ENCODE measurements at regions of chr16 and their contacts with region 1.

Region 1: DNA sequence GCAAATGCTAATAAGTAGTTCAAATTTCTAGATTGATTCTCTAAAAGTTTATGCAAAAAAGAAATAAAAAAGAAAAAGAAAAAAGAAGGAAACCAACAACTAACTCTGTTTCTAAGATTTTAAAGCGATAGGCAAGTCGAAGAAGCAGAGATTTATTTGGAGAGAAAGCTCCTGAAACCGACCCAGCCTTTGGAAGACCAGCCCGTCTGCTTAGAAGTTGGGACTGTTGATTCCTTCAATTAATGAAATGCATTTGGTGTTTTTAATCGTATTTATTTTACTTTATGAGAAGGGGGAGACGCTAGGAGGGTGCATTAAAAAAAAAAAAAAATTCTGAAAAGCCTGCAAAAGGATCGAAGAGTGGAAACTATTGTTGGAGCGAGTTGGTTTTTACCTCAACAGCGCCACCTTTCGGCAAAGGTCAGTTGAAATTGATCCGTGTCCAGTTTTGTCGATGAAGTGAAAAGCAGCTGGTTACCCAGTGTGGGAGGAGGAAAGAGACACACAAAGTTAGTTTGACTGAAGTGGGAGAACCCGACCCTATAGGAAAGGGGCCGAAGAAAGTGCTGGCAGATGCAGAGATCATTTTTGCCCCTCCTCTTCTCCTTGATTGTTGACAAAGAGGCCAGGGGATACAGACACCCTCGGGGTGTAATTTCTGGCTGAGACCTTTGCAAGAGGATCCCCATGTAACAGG is 1.5 kb upstream of the MAF start:
- DNase-seq: peak; percentile 41 to 85 (median 80)
- H3K4me3 ChIP-seq: peak overlapping the region; percentile 75
- H3K4me3 Mint-ChIP-seq: peak overlapping the region; percentile 92 to 99 (median 94)
- H3K27ac ChIP-seq: no peak overlapping the region
- H3K27ac Mint-ChIP-seq: peak overlapping the region in 7 of 8 donors; percentile 92 to 96 (median 94)
- H3K4me1 ChIP-seq: peaks cover 14% of the 10 kb centered on the region
- H3K4me1 Mint-ChIP-seq: peaks cover 15 to 36% (median 32%) of the 10 kb centered on the region in 3 donors
- H3K27me3 ChIP-seq: no peaks in the 10 kb centered on the region
- H3K27me3 Mint-ChIP-seq: peaks cover under 1 to 4% of the 10 kb centered on the region in 2 donors

Region 2: GRCh38 chr16:78925083-78925767 is 676.9 kb before region 1 on chr16:
- CTCF ChIA-PET with region 1: interaction called, 18 read pairs
- POLR2A ChIA-PET with region 1: interaction called, 3 read pairs
- DNase-seq: peak in 3 of 5 donors; percentile 2 to 49 (median 5)
- H3K4me3 ChIP-seq: no peak overlapping the region
- H3K4me3 Mint-ChIP-seq: no peak overlapping the region
- H3K27ac ChIP-seq: no peak overlapping the region
- H3K27ac Mint-ChIP-seq: peak overlapping the region in 1 of 8 donors; percentile 15
- H3K4me1 ChIP-seq: no peaks in the 10 kb centered on the region
- H3K4me1 Mint-ChIP-seq: peaks cover 0 to 11% (median 2%) of the 10 kb centered on the region in 3 donors
- H3K27me3 ChIP-seq: no peaks in the 10 kb centered on the region
- H3K27me3 Mint-ChIP-seq: peaks cover 0 to 3% of the 10 kb centered on the region in 2 donors

Region 3: GRCh38 chr16:79278506-79278905 is 323.6 kb before region 1 on chr16:
- CTCF ChIA-PET with region 1: interaction called, 10 read pairs
- POLR2A ChIA-PET with region 1: interaction called, 5 read pairs
- DNase-seq: peak; percentile 27 to 83 (median 37)
- H3K4me3 ChIP-seq: peak overlapping the region; percentile 7
- H3K4me3 Mint-ChIP-seq: peak overlapping the region; percentile 46 to 77 (median 66)
- H3K27ac ChIP-seq: peak overlapping the region; percentile 55
- H3K27ac Mint-ChIP-seq: peak overlapping the region; percentile 80 to 99 (median 95)
- H3K4me1 ChIP-seq: peaks cover 50% of the 10 kb centered on the region
- H3K4me1 Mint-ChIP-seq: peaks cover 56 to 81% (median 72%) of the 10 kb centered on the region in 3 donors
- H3K27me3 ChIP-seq: no peaks in the 10 kb centered on the region
- H3K27me3 Mint-ChIP-seq: no peaks in the 10 kb centered on the region

Region 4: GRCh38 chr16:79563921-79564320 is 38.2 kb before region 1 on chr16:
- CTCF ChIA-PET with region 1: no interaction called
- POLR2A ChIA-PET with region 1: no interaction called
- DNase-seq: no peak
- H3K4me3 ChIP-seq: no peak overlapping the region
- H3K4me3 Mint-ChIP-seq: no peak overlapping the region
- H3K27ac ChIP-seq: no peak overlapping the region
- H3K27ac Mint-ChIP-seq: no peak overlapping the region
- H3K4me1 ChIP-seq: no peaks in the 10 kb centered on the region
- H3K4me1 Mint-ChIP-seq: no peaks in the 10 kb centered on the region
- H3K27me3 ChIP-seq: no peaks in the 10 kb centered on the region
- H3K27me3 Mint-ChIP-seq: peaks cover 6 to 23% of the 10 kb centered on the region in 2 donors

Region 5: DNA sequence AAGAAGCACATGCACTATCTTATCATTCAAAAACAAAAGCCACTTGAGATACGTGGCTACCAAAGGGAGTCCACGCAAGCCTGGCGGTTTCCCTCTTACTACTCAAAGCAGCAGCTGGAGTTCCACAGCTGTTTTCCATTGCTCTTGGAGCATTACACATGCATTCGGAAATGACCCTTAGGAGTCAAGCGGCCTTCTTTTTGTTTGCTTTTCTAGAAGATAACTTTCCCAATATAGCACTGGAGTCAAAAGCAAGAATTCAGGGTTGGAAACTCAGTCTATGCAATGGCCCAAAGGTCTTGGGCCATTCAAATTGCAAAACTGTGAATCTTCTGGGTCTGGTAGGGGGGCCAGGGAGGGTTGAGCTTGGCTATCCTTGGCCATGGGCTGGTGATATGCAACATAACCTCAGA is 96.3 kb after region 1 on chr16:
- CTCF ChIA-PET with region 1: no interaction called
- POLR2A ChIA-PET with region 1: no interaction called
- DNase-seq: no peak
- H3K4me3 ChIP-seq: no peak overlapping the region
- H3K4me3 Mint-ChIP-seq: no peak overlapping the region
- H3K27ac ChIP-seq: no peak overlapping the region
- H3K27ac Mint-ChIP-seq: no peak overlapping the region
- H3K4me1 ChIP-seq: no peaks in the 10 kb centered on the region
- H3K4me1 Mint-ChIP-seq: no peaks in the 10 kb centered on the region
- H3K27me3 ChIP-seq: no peaks in the 10 kb centered on the region
- H3K27me3 Mint-ChIP-seq: peaks cover 8 to 15% of the 10 kb centered on the region in 2 donors

Region 6: GRCh38 chr16:79850348-79850747 is 248.3 kb after region 1 on chr16:
- CTCF ChIA-PET with region 1: no interaction called
- POLR2A ChIA-PET with region 1: no interaction called
- DNase-seq: no peak
- H3K4me3 ChIP-seq: no peak overlapping the region
- H3K4me3 Mint-ChIP-seq: no peak overlapping the region
- H3K27ac ChIP-seq: no peak overlapping the region
- H3K27ac Mint-ChIP-seq: no peak overlapping the region
- H3K4me1 ChIP-seq: no peaks in the 10 kb centered on the region
- H3K4me1 Mint-ChIP-seq: no peaks in the 10 kb centered on the region
- H3K27me3 ChIP-seq: no peaks in the 10 kb centered on the region
- H3K27me3 Mint-ChIP-seq: peaks cover 11 to 17% of the 10 kb centered on the region in 2 donors

Measured in CD8-positive, alpha-beta memory T cell (primary cell).